ENCODE measurements at regions of chr14 and their contacts with region 1.

Region 1: GRCh38 chr14:74127634-74128033 is 42.9 kb downstream of the LIN52 start:
- DNase-seq: no peak
- H3K4me3 ChIP-seq: no peak overlapping the region
- H3K27ac ChIP-seq: no peak overlapping the region
- H3K4me1 ChIP-seq: no peaks in the 10 kb centered on the region
- H3K27me3 ChIP-seq: no peaks in the 10 kb centered on the region
- CTCF ChIP-seq: no peak
- POLR2A ChIP-seq: no peak

Region 2: DNA sequence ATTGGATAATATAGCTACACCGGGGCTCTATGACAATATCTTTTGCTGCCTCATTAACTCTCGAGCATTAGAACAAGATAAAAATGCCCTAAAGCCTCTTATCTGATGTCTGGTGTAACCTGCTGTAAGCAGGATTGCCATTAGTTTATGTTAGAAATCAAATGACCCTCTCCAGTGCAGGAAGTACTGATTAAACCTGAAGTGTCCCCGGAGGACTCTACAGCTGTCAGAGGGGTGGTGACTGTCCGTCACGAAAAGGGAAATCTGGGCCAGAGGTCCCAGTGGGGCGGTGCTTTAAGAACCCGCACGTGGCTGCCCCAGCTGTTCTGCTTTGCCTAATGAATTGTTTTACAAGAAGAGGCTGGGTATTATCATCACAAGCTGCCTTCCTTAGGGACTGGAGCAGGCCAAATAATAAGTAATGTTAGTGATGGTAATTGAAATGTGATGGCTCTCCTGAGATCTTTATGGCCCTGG is 12.8 kb after region 1 on chr14:
- CTCF ChIA-PET with region 1: interaction called, 14 read pairs
- POLR2A ChIA-PET with region 1: no interaction called
- dilution Hi-C with region 1: no loop called
- intact Hi-C with region 1: no loop called
- DNase-seq: peak; percentile 33
- H3K4me3 ChIP-seq: no peak overlapping the region
- H3K27ac ChIP-seq: no peak overlapping the region
- H3K4me1 ChIP-seq: peaks cover 8% of the 10 kb centered on the region
- H3K27me3 ChIP-seq: no peaks in the 10 kb centered on the region
- CTCF ChIP-seq: no peak
- POLR2A ChIP-seq: no peak